Caco-2 (cell line): ENCODE measurements at regions of chr4 and their contacts with region 1.

Region 1: DNA sequence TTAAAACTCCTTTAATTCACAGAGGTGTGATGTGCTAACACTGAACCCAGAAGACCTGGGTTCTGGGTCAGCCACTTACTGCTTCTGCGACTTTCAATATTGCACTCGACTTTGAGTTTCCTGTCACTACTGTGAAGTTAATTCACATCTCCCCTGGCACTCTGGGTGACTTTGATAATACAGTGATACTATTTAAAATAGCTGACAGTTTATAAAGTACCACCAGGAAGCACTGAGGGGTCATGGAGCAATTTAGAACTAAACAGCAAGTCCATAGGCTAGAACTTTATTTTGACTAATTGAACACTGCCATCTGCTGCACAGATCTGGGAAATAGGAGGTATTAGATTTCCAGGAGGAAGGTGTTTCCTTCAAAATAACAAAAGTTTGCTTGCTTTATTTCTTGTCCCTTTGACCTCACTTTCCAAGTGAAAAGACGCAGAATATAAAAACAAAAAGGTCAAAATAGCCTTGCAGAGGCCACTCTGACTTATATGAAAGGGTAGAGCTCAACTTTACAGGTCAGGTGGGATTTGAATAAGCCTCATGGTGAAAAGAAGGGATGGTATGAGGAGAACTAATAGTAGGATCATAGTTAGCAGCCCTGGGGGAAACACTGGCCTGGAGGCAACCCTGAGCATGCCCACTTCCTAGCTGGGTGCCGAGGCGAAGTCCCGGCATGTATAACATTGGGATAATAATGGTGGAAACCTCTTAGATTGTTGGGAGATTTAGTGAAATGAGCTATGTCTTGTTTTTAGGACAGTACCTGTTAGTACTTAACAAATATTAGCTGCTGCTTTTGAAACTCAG is 53.4 kb downstream of the ZNF518B start:
- DNase-seq: peak in 1 of 2 experiments; percentile 52
- H3K4me3 ChIP-seq: no peak overlapping the region
- H3K4me3 Mint-ChIP-seq: no peak overlapping the region
- H3K27ac Mint-ChIP-seq: no peak overlapping the region
- H3K4me1 ChIP-seq: no peaks in the 10 kb centered on the region; the same call in 1 of the 2 replicates
- H3K4me1 Mint-ChIP-seq: no peaks in the 10 kb centered on the region
- H3K27me3 ChIP-seq: no peaks in the 10 kb centered on the region
- H3K27me3 Mint-ChIP-seq: no peaks in the 10 kb centered on the region
- CTCF ChIP-seq: peak; percentile 48 to 50

Region 2: DNA sequence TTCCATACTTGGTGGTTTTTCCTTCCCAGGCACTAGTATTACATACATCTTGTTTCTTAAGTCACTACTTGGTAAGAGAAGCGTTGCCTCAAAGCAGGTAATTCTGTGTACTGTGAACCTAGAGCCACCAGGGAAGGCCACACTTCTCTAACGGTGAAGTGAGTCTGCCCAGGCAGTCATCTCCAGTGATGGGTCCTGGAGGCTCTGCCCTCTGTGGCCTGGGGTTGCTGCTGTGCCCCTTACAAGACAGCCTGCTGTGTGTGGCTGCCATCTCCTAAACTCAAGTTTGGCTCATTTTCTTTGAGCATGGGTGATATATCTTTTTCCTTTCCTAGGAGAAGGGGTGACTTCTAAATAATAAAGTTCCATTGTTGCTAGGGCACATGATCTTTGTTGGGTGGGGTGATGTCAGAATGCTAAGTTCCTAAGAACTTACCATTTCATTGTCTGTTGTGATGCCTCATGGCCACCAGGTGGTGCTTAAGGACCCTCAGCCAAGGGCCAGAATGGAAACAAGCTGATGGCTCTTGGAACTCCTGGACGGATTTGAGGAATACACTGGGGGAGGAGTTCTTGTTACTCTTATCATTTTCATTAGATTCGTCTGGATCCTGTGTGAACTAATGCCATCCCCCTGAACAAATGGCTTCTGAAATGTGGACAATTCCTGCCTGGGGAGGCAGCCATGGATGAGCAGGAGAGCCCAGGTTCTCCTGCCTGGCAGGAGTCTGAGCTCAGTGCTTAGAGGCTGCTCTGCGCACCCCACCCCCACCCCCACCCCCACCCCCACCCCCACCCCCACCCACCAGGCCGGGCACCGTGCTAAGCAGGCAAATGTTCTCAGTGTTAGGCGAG is 246.1 kb before region 1 on chr4:
- CTCF ChIA-PET with region 1: interaction called, 31 read pairs
- POLR2A ChIA-PET with region 1: no interaction called
- intact Hi-C with region 1: loop called (anchors 1 kb)
- DNase-seq: peak; percentile 58 to 62
- H3K4me3 ChIP-seq: no peak overlapping the region
- H3K4me3 Mint-ChIP-seq: no peak overlapping the region
- H3K27ac Mint-ChIP-seq: no peak overlapping the region
- H3K4me1 ChIP-seq: peaks cover 7% of the 10 kb centered on the region
- H3K4me1 Mint-ChIP-seq: peaks cover 10% of the 10 kb centered on the region
- H3K27me3 ChIP-seq: no peaks in the 10 kb centered on the region
- H3K27me3 Mint-ChIP-seq: peaks cover 6% of the 10 kb centered on the region
- CTCF ChIP-seq: peak; percentile 77 to 79

Region 3: GRCh38 chr4:10296730-10297129 is 107.1 kb before region 1 on chr4:
- CTCF ChIA-PET with region 1: no interaction called
- POLR2A ChIA-PET with region 1: no interaction called
- intact Hi-C with region 1: no loop called
- DNase-seq: no peak
- H3K4me3 ChIP-seq: no peak overlapping the region
- H3K4me3 Mint-ChIP-seq: no peak overlapping the region
- H3K27ac Mint-ChIP-seq: no peak overlapping the region
- H3K4me1 ChIP-seq: no peaks in the 10 kb centered on the region
- H3K4me1 Mint-ChIP-seq: no peaks in the 10 kb centered on the region
- H3K27me3 ChIP-seq: no peaks in the 10 kb centered on the region; the same call in 1 of the 2 replicates
- H3K27me3 Mint-ChIP-seq: no peaks in the 10 kb centered on the region
- CTCF ChIP-seq: no peak

Region 4: DNA sequence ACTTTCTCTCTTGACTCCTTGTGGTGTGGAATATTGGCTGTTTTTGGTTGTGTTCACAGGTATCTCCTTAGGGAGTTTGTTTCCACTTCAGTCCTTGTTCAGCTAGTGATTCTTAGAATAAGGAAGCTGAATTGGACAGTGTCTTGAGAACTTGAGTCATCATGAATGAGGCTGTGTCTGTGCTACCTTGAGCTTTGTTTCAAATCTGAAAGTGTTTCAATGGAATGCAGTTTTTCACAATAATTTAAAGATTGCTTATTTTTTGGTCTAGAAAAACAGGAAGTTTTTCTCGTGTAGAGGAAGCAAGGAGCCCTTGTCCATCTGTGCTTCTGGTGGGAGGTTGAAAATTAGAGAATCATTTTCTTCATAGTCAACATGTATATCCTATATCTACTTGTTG is 23.1 kb before region 1 on chr4:
- CTCF ChIA-PET with region 1: no interaction called
- POLR2A ChIA-PET with region 1: no interaction called
- intact Hi-C with region 1: no loop called
- DNase-seq: no peak
- H3K4me3 ChIP-seq: no peak overlapping the region
- H3K4me3 Mint-ChIP-seq: no peak overlapping the region
- H3K27ac Mint-ChIP-seq: no peak overlapping the region
- H3K4me1 ChIP-seq: no peaks in the 10 kb centered on the region
- H3K4me1 Mint-ChIP-seq: no peaks in the 10 kb centered on the region
- H3K27me3 ChIP-seq: no peaks in the 10 kb centered on the region
- H3K27me3 Mint-ChIP-seq: no peaks in the 10 kb centered on the region
- CTCF ChIP-seq: no peak

Region 5: DNA sequence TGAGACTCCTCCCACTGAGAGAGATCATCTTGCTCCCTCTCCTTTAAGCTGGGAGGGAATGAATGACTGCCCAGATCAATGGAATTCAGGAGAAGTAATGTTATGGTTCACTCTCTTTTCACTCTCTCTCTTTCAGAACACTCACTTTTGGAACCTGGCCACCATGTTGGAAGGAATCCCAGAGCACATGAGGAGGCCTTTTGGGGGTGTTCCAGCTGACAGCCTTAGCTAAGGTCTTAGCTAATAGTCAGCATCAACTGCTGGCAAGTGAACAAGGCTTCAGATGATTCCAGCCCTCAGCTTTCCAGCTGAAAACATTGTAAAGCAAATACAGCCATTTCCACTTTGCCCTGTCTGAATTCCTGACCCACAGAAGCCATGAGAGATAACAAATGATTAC is 404.8 kb after region 1 on chr4:
- CTCF ChIA-PET with region 1: no interaction called
- POLR2A ChIA-PET with region 1: no interaction called
- intact Hi-C with region 1: no loop called
- DNase-seq: no peak
- H3K4me3 ChIP-seq: no peak overlapping the region
- H3K4me3 Mint-ChIP-seq: no peak overlapping the region
- H3K27ac Mint-ChIP-seq: no peak overlapping the region
- H3K4me1 ChIP-seq: no peaks in the 10 kb centered on the region
- H3K4me1 Mint-ChIP-seq: no peaks in the 10 kb centered on the region
- H3K27me3 ChIP-seq: no peaks in the 10 kb centered on the region
- H3K27me3 Mint-ChIP-seq: no peaks in the 10 kb centered on the region
- CTCF ChIP-seq: no peak

Region 6: DNA sequence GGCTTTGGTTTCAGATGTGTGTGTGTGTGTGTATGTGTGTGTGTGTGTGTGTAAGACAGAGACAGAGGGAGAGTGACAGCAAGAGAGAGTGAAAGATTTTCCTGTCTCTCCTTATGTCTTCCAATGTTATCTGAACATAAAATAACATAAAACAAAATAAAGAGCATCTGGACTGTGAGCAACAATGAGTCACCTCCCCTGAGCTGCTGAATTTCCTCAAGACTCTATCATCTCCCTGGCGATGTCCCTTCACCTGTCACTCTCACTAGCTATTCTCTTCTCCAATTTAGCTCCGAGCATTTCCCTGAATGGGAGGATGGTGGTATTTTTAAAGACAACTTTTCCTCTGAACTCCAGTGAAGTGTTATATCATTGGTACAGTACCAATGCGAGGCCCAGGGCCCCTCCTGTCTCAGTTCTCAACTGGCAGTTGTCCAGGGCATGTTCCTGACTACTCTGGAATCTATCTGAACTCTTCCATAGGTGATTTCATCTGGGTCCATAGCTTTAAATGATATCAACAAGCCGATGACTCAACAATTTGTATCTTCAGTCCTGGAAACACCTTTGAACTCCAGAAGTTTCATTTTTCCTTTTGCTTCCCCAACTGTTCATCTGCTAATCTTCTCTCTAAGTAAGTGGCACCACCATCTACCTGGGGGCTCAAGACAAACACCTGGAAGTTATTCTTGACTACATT is 475.7 kb after region 1 on chr4:
- CTCF ChIA-PET with region 1: no interaction called
- POLR2A ChIA-PET with region 1: no interaction called
- intact Hi-C with region 1: no loop called
- DNase-seq: no peak
- H3K4me3 ChIP-seq: no peak overlapping the region
- H3K4me3 Mint-ChIP-seq: no peak overlapping the region
- H3K27ac Mint-ChIP-seq: no peak overlapping the region
- H3K4me1 ChIP-seq: peaks cover 4% of the 10 kb centered on the region; the same call in 1 of the 2 replicates
- H3K4me1 Mint-ChIP-seq: no peaks in the 10 kb centered on the region
- H3K27me3 ChIP-seq: no peaks in the 10 kb centered on the region
- H3K27me3 Mint-ChIP-seq: no peaks in the 10 kb centered on the region
- CTCF ChIP-seq: no peak